Activated CD8-positive, alpha-beta T cell treated with anti-CD3 and anti-CD28 coated beads, Interleukin-2, amount 10 ng/mL, durations not matched to agents 7 days and 5 days (primary cell): ENCODE measurements at regions of chr20 and their contacts with region 1.

Region 1: DNA sequence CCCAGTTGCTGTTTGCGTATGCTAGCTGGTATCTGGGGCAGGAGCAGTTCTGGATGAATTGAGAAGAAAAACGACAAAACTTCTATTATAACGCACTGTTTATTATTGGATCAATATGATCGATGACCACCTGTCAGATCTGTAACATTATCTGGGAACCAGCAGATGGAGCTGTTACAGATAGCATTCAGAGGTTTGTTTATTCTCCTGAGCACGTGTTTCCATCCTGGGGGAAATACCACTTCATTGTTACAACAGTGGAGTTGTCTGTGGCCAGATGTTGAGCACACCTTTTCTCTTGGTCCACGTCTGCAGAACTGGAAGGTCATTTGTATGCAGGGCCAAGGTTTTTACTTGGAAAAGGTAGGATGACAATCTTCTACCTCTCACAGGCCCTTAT is 16.0 kb upstream of the NKX2-2 start:
- DNase-seq: no peak
- ATAC-seq: no peak
- H3K4me3 Mint-ChIP-seq: no peak overlapping the region
- H3K27ac Mint-ChIP-seq: no peak overlapping the region
- H3K4me1 Mint-ChIP-seq: no peaks in the 10 kb centered on the region
- H3K27me3 Mint-ChIP-seq: peaks cover 47% of the 10 kb centered on the region

Region 2: DNA sequence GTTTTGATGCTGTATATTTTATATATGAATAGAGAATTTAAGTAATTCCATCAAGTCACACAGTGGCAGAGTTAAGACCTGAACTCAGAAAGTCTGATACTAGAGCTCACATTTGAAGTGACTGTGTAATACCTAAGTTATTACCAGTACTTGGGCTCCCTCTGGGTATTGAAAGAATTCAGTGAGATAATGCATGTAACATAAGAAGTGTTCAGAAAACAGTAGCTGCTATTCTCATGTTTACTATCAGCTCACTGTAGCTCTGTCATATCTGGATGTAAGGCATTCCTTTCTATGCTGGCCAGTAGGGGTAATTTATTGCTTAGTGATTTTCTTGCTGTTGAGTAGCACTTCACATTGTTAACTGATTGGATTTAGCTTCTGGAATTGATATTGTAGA is 177.2 kb before region 1 on chr20:
- CTCF ChIA-PET with region 1: no interaction called
- POLR2A ChIA-PET with region 1: no interaction called
- DNase-seq: no peak
- ATAC-seq: no peak
- H3K4me3 Mint-ChIP-seq: no peak overlapping the region
- H3K27ac Mint-ChIP-seq: no peak overlapping the region
- H3K4me1 Mint-ChIP-seq: no peaks in the 10 kb centered on the region
- H3K27me3 Mint-ChIP-seq: no peaks in the 10 kb centered on the region

Region 3: DNA sequence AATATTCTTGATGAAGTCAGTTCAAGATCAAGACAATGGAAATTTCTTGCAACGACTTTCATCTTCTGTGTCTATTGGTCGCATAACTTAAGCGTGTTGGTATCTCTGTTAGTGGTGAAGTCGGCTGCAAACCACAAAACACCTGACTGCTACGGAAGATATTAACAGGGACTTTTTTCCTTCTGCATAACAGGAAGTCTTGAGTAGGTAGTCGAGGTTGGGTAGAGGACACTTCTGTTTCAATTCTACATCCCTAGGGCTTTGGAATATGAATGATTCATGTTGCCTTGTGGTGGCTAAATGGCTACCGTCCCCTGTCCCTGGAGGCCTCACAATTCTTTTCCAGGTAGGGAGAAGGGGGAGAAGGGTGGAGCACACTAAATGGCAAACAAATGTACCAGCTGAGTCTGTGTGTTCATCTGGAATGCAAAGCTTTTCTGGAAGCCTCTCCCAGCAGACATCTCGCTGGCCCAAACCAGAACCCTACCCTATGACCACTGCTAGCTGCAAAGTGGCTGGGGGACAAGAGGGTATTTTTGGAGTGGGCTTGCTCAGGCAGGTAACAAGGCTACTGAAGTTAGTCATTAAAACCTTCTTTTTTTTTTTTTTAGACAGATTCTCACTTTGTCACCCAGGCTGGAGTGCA is 18.6 kb after region 1 on chr20:
- CTCF ChIA-PET with region 1: interaction called, 10 read pairs
- POLR2A ChIA-PET with region 1: interaction called, 3 read pairs
- DNase-seq: peak; percentile 53
- ATAC-seq: peak; percentile 80
- H3K4me3 Mint-ChIP-seq: no peak overlapping the region
- H3K27ac Mint-ChIP-seq: peak overlapping the region; percentile 47
- H3K4me1 Mint-ChIP-seq: peaks cover 13% of the 10 kb centered on the region
- H3K27me3 Mint-ChIP-seq: no peaks in the 10 kb centered on the region

Region 4: DNA sequence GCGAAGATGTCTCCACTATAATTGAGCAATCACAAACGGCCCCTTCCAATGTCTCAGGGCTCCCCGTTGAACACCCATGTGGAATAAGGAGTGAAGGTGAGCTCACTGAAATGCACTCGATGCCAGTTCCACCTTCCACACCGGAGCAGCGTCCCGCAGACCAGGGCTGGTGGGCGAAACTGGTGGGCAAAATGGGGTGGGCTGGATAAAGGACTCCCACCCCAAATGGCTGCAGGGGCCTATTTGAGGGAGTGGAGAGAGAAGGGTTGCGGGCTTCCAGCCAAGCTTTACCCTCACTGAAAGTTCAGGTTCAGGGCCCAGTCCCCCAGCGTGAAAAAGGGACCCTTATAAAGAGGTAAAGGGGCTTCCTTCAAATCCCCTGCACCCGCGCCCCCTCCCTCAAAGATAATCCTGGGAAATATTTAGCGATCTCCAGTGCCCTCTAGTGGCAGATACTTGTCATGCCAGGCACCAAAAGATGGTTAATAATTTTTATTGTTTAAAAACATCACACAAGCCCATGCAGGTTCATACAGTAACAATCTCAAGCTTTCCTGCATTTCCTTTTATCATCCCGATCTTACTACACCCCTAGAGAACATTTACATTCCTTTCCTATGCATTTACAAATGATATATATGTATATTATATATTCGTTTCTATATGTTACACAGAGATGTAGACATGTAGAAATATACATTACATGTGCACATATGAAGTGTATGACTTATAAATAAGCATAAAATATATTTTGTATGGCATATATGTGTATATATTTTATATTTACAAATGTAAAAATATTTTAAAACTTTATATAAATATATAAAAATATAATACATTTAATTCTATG is 42.2 kb after region 1 on chr20:
- CTCF ChIA-PET with region 1: interaction called, 49 read pairs
- POLR2A ChIA-PET with region 1: no interaction called
- DNase-seq: peak; percentile 27
- ATAC-seq: no peak
- H3K4me3 Mint-ChIP-seq: no peak overlapping the region
- H3K27ac Mint-ChIP-seq: no peak overlapping the region
- H3K4me1 Mint-ChIP-seq: peaks cover 6% of the 10 kb centered on the region
- H3K27me3 Mint-ChIP-seq: peaks cover 14% of the 10 kb centered on the region

Region 5: DNA sequence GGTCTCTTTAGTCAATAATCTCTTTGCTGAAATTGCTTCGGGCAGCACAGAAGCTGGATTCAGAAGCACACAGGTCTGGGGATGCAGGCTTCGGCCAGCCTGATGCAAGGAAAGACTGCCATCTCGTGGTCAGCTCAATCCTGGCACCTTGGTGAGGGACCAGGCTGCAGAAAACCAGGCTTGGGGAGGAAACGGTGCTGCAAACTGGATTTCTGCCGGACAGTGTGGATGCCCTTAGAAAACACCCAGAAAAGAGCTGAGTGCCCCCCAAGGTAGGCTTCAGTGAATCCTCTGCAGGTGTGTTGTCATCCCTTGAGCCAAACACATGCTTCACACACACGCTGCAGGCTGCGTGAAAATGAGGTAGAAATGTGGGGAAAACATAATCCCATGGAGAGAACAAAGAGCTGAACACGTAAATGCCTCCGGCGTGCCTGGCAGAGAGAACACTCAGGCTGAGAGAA is 85.8 kb after region 1 on chr20:
- CTCF ChIA-PET with region 1: interaction called, 11 read pairs
- POLR2A ChIA-PET with region 1: no interaction called
- DNase-seq: peak; percentile 50
- ATAC-seq: peak; percentile 39
- H3K4me3 Mint-ChIP-seq: no peak overlapping the region
- H3K27ac Mint-ChIP-seq: no peak overlapping the region
- H3K4me1 Mint-ChIP-seq: peaks cover 3% of the 10 kb centered on the region
- H3K27me3 Mint-ChIP-seq: no peaks in the 10 kb centered on the region

Region 6: GRCh38 chr20:21820688-21821087 is 290.8 kb after region 1 on chr20:
- CTCF ChIA-PET with region 1: no interaction called
- POLR2A ChIA-PET with region 1: no interaction called
- DNase-seq: no peak
- ATAC-seq: no peak
- H3K4me3 Mint-ChIP-seq: no peak overlapping the region
- H3K27ac Mint-ChIP-seq: no peak overlapping the region
- H3K4me1 Mint-ChIP-seq: no peaks in the 10 kb centered on the region
- H3K27me3 Mint-ChIP-seq: no peaks in the 10 kb centered on the region